ENCODE measurements at regions of chr1 and their contacts with region 1.

Region 1: DNA sequence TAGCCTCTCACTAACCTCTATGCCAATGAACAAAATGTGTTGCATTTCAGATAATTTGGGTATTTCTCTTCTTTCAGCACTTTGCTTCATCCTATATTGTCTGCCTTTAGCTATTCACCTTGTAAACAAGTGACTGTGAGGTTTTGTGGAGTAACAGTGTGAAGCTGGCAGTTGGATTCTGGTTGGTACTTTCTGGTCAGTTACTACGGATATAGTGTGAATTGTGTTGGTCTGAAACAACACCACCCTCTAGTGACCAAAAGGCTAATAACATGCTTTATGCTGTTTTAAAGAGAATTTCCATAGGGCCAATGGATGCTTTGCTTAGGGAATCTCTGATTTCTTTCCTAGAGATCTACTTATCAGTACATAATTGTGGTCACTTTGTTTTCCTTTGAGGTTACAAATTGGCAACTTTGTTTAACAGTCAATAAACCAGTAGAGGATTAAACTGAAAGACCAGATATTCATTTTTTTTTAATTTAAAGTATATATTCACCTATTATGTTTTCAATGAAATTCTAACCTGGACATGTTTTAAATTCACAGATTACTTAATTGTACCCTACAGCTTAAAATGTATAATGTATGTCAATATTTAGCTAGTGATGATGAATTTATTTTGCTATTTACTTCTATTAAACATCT is 2.5 kb upstream of the PTGER3 start:
- DNase-seq: peak in 3 of 14 experiments; percentile 58 to 72 (median 67)
- ATAC-seq: peak; percentile 48
- H3K4me3 ChIP-seq: no peak overlapping the region
- H3K4me3 Mint-ChIP-seq: peak overlapping the region; percentile 44
- H3K27ac ChIP-seq: no peak overlapping the region
- H3K27ac Mint-ChIP-seq: no peak overlapping the region
- H3K4me1 ChIP-seq: peaks cover 19% of the 10 kb centered on the region
- H3K4me1 Mint-ChIP-seq: peaks cover 22% of the 10 kb centered on the region
- H3K27me3 ChIP-seq: peaks cover 27 to 36% of the 10 kb centered on the region in 2 experiments
- H3K27me3 Mint-ChIP-seq: peaks cover 41% of the 10 kb centered on the region
- CTCF ChIP-seq: peak; percentile 76

Region 2: DNA sequence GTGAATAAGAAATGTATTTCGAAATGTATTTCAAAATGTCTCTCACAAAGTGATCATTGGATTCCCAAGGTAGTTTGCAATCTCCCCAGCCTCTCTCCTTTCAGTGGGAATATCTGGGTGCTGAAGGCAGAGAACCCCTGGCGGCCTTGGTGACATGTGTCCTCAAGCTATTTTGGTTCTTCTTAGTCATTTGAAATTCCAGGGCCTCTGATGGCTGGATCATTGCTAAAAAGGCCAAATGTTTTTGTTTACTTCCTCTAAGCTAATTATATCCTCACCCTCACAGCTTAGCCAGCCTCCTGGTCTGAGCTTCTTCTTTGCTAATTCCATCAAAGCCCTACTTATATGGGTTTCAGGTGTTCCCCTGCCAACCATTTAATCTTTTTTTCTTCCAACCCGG is 915.9 kb before region 1 on chr1:
- CTCF ChIA-PET with region 1: no interaction called
- POLR2A ChIA-PET with region 1: no interaction called
- intact Hi-C with region 1: loop called in 1 of 2 experiments (anchors 10 kb)
- DNase-seq: no peak
- ATAC-seq: no peak
- H3K4me3 ChIP-seq: no peak overlapping the region
- H3K4me3 Mint-ChIP-seq: no peak overlapping the region
- H3K27ac ChIP-seq: no peak overlapping the region
- H3K27ac Mint-ChIP-seq: no peak overlapping the region
- H3K4me1 ChIP-seq: no peaks in the 10 kb centered on the region
- H3K4me1 Mint-ChIP-seq: no peaks in the 10 kb centered on the region
- H3K27me3 ChIP-seq: no peaks in the 10 kb centered on the region
- H3K27me3 Mint-ChIP-seq: peaks cover 5% of the 10 kb centered on the region
- CTCF ChIP-seq: no peak

Region 3: GRCh38 chr1:70528590-70529333 is 521.3 kb before region 1 on chr1:
- CTCF ChIA-PET with region 1: no interaction called
- POLR2A ChIA-PET with region 1: no interaction called
- intact Hi-C with region 1: loop called in 1 of 2 experiments (anchors 5 kb)
- DNase-seq: peak in 3 of 14 experiments; percentile 9 to 28 (median 24)
- ATAC-seq: no peak
- H3K4me3 ChIP-seq: no peak overlapping the region
- H3K4me3 Mint-ChIP-seq: no peak overlapping the region
- H3K27ac ChIP-seq: no peak overlapping the region
- H3K27ac Mint-ChIP-seq: no peak overlapping the region
- H3K4me1 ChIP-seq: no peaks in the 10 kb centered on the region
- H3K4me1 Mint-ChIP-seq: peaks cover 8% of the 10 kb centered on the region
- H3K27me3 ChIP-seq: no peaks in the 10 kb centered on the region
- H3K27me3 Mint-ChIP-seq: peaks cover 29% of the 10 kb centered on the region
- CTCF ChIP-seq: peak; percentile 40

Region 4: DNA sequence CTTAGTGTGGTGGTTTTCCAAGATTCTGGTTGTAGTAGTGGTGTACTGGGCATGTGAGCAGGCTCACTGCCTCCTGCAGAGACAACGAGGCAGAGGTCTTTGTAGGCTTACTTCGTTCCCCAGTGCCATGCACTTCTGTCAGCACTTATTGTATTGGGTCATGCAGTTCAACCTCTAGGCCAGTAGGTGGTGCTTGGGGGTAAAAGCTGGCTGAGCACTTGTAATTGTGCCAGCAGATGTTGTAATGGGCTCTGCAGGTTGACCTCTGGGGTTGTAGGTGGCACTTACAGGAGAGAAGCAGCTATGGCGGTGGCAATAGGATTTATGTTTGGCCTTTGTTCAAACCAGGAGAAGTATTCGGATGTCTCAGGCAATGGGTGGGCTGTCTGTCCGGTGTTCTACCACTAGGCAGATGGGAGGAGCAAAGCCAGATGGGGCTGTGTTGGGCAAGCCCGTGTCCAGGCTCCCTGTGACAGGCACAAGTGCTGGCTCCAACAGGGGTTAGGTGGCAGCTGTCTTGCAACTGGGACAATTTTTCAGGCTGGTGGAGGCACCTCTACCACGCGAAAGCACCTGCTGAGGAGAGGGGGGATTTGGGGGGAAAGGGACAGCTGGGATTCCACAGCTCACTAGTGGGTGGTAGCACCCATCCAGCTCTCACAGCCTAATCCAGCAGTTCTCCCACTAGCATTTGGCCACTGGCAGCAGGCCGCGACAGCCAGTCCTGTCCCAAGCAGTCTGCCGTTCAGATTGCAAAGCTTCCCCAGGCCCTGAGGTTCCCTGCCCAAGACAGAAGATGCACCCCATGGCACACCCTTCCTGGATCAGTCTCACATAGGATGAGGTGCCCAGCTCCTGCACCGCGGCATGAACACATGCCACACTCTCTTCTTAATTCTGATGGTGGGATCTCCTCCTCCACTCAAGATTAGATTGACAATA is 364.5 kb before region 1 on chr1:
- CTCF ChIA-PET with region 1: no interaction called
- POLR2A ChIA-PET with region 1: no interaction called
- intact Hi-C with region 1: loop called in 1 of 2 experiments (anchors 2 kb)
- DNase-seq: peak in 8 of 14 experiments; percentile 3 to 57 (median 24)
- ATAC-seq: peak; percentile 34
- H3K4me3 ChIP-seq: no peak overlapping the region
- H3K4me3 Mint-ChIP-seq: no peak overlapping the region
- H3K27ac ChIP-seq: no peak overlapping the region
- H3K27ac Mint-ChIP-seq: no peak overlapping the region
- H3K4me1 ChIP-seq: no peaks in the 10 kb centered on the region
- H3K4me1 Mint-ChIP-seq: no peaks in the 10 kb centered on the region
- H3K27me3 ChIP-seq: no peaks in the 10 kb centered on the region
- H3K27me3 Mint-ChIP-seq: peaks cover 6% of the 10 kb centered on the region
- CTCF ChIP-seq: peak; percentile 53

Region 5: DNA sequence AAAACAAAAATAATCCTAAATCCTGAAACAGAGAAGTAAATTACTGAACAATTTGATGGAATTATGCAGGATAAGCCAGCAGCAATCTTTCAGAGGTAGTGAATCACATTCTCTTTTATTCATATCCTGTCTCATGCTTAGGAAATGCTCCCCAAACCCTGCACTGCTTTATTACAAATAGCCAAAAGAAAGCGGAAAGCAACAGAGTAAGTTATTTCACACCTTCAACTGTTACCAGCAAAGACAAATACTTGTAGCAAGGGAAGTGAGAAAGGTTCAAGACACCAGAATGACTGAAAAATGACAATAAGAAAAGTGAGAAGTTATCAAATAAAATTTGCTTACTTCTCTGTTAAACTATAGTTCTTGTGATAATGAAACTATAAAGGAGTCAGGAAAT is 24.6 kb after region 1 on chr1:
- CTCF ChIA-PET with region 1: no interaction called
- POLR2A ChIA-PET with region 1: no interaction called
- intact Hi-C with region 1: no loop called
- DNase-seq: no peak
- ATAC-seq: no peak
- H3K4me3 ChIP-seq: no peak overlapping the region
- H3K4me3 Mint-ChIP-seq: no peak overlapping the region
- H3K27ac ChIP-seq: no peak overlapping the region
- H3K27ac Mint-ChIP-seq: peak overlapping the region; percentile 44
- H3K4me1 ChIP-seq: no peaks in the 10 kb centered on the region
- H3K4me1 Mint-ChIP-seq: peaks cover 62% of the 10 kb centered on the region
- H3K27me3 ChIP-seq: no peaks in the 10 kb centered on the region
- H3K27me3 Mint-ChIP-seq: no peaks in the 10 kb centered on the region
- CTCF ChIP-seq: no peak

Region 6: GRCh38 chr1:71101839-71102376 is 51.8 kb after region 1 on chr1:
- CTCF ChIA-PET with region 1: no interaction called
- POLR2A ChIA-PET with region 1: no interaction called
- intact Hi-C with region 1: no loop called
- DNase-seq: no peak
- ATAC-seq: no peak
- H3K4me3 ChIP-seq: no peak overlapping the region
- H3K4me3 Mint-ChIP-seq: no peak overlapping the region
- H3K27ac ChIP-seq: no peak overlapping the region
- H3K27ac Mint-ChIP-seq: no peak overlapping the region
- H3K4me1 ChIP-seq: no peaks in the 10 kb centered on the region
- H3K4me1 Mint-ChIP-seq: no peaks in the 10 kb centered on the region
- H3K27me3 ChIP-seq: no peaks in the 10 kb centered on the region
- H3K27me3 Mint-ChIP-seq: peaks cover 19% of the 10 kb centered on the region
- CTCF ChIP-seq: no peak

Measured in CD4-positive, alpha-beta T cell (primary cell).